Activated naive CD4-positive, alpha-beta T cell treated with anti-CD3 and anti-CD28 coated beads for 36 hours (primary cell): ENCODE measurements at regions of chr11 and their contacts with region 1.

Region 1: GRCh38 chr11:3971756-3972404 is 116.4 kb downstream of the STIM1 start:
- DNase-seq: no peak
- H3K4me3 Mint-ChIP-seq: no peak overlapping the region
- H3K27ac Mint-ChIP-seq: no peak overlapping the region
- H3K4me1 Mint-ChIP-seq: peaks cover 68% of the 10 kb centered on the region
- H3K27me3 Mint-ChIP-seq: no peaks in the 10 kb centered on the region

Region 2: GRCh38 chr11:3959015-3959919 is 12.6 kb before region 1 on chr11:
- CTCF ChIA-PET with region 1: interaction called, 7 read pairs
- intact Hi-C with region 1: loop called (anchors 1 kb)
- DNase-seq: no peak
- H3K4me3 Mint-ChIP-seq: no peak overlapping the region
- H3K27ac Mint-ChIP-seq: no peak overlapping the region
- H3K4me1 Mint-ChIP-seq: peaks cover 79% of the 10 kb centered on the region
- H3K27me3 Mint-ChIP-seq: no peaks in the 10 kb centered on the region